ENCODE measurements at regions of chr2 and their contacts with region 1.

Region 1: GRCh38 chr2:105080461-105080860 is 42.6 kb downstream of the MRPS9 start:
- DNase-seq: no peak
- H3K4me3 ChIP-seq: no peak overlapping the region
- H3K27ac ChIP-seq: no peak overlapping the region
- H3K4me1 ChIP-seq: no peaks in the 10 kb centered on the region
- H3K27me3 ChIP-seq: no peaks in the 10 kb centered on the region
- CTCF ChIP-seq: no peak
- EP300 ChIP-seq: no peak
- POLR2A ChIP-seq: no peak

Region 2: GRCh38 chr2:104902317-104902716 is 178.1 kb before region 1 on chr2:
- in situ Hi-C with region 1: no loop called
- intact Hi-C with region 1: no loop called
- DNase-seq: no peak
- H3K4me3 ChIP-seq: no peak overlapping the region
- H3K27ac ChIP-seq: no peak overlapping the region
- H3K4me1 ChIP-seq: peaks cover 0 to 6% (median 0%) of the 10 kb centered on the region in 4 donors
- H3K27me3 ChIP-seq: peaks cover 15% of the 10 kb centered on the region
- CTCF ChIP-seq: no peak
- EP300 ChIP-seq: no peak
- POLR2A ChIP-seq: no peak

Region 3: DNA sequence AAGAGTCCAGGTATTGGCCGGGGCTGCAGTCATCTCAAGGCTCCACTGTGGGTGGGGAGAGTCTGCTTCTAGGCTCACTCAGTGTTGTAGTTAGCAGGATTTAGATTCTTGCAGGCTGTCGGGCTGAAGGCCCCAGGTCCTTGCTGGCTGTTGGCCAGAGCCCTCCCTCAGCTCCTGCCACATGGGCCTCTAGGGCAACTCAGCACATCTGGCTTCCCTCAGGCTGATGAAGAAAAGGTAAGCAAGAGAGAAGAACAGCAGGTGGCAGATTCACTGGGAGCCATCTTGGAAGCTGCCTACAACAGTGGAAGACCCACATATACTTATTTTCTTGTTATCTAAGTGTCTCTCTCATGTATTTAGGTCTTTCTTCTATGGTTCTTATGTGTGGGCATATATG is 38.3 kb before region 1 on chr2:
- in situ Hi-C with region 1: no loop called
- intact Hi-C with region 1: no loop called
- DNase-seq: no peak
- H3K4me3 ChIP-seq: no peak overlapping the region
- H3K27ac ChIP-seq: no peak overlapping the region
- H3K4me1 ChIP-seq: peaks cover 5 to 27% (median 11%) of the 10 kb centered on the region in 4 donors
- H3K27me3 ChIP-seq: no peaks in the 10 kb centered on the region
- CTCF ChIP-seq: no peak
- EP300 ChIP-seq: no peak
- POLR2A ChIP-seq: no peak

Region 4: DNA sequence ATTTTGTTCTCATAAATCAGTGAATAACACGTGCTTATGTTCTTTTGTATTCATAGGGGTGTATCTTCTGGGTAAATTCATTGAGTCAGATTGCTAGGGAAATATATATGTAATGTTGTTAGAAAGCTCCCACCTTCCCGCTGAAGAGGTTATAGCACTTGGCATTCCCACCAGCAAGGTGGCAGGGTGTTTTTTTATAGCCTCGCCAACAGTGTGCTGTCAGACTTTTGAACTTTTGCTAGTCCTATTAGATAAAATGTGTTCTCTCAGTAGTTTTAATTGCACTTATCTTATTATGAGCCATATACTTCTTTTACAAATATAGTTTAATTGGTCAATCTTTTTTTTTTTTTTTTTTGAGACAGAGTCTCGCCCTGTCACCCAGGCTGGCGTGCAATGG is 11.6 kb before region 1 on chr2:
- in situ Hi-C with region 1: no loop called
- intact Hi-C with region 1: loop called (anchors 1 kb)
- DNase-seq: peak; percentile 29
- H3K4me3 ChIP-seq: no peak overlapping the region
- H3K27ac ChIP-seq: peak overlapping the region in 3 of 4 donors; percentile 46 to 70 (median 67)
- H3K4me1 ChIP-seq: peaks cover 0 to 24% (median 13%) of the 10 kb centered on the region in 4 donors
- H3K27me3 ChIP-seq: no peaks in the 10 kb centered on the region
- CTCF ChIP-seq: no peak
- EP300 ChIP-seq: no peak
- POLR2A ChIP-seq: no peak

Measured in transverse colon (tissue), 4 donors.